Activated CD4-positive, alpha-beta T cell treated with anti-CD3 and anti-CD28 coated beads, Interleukin-2, amount 10 ng/mL, durations not matched to agents 7 days and 5 days (primary cell): ENCODE measurements at regions of chr16 and their contacts with region 1.

Region 1: GRCh38 chr16:18801197-18801972 is at the start of gene ARL6IP1:
- DNase-seq: peak; percentile 98
- H3K4me3 Mint-ChIP-seq: peak within 1 kb of the TSS; percentile 99
- H3K27ac Mint-ChIP-seq: peak within 1 kb of the TSS; percentile 98
- H3K4me1 Mint-ChIP-seq: peaks cover 73% of the 10 kb centered on the region
- H3K27me3 Mint-ChIP-seq: no peaks in the 10 kb centered on the region
- total RNA-seq, gene ARL6IP1: 276 to 321 TPM

Region 2: GRCh38 chr16:18789850-18790724 is 11.3 kb before region 1 on chr16 and contains the start of gene RPS15A:
- CTCF ChIA-PET with region 1: interaction called, 86 read pairs
- POLR2A ChIA-PET with region 1: interaction called, 34 read pairs
- DNase-seq: peak; percentile 97
- H3K4me3 Mint-ChIP-seq: peak within 1 kb of the TSS; percentile 85
- H3K27ac Mint-ChIP-seq: peak within 1 kb of the TSS; percentile 94
- H3K4me1 Mint-ChIP-seq: peaks cover 57% of the 10 kb centered on the region
- H3K27me3 Mint-ChIP-seq: no peaks in the 10 kb centered on the region
- total RNA-seq, gene RPS15A: 1,939 to 2,119 TPM

Region 3: GRCh38 chr16:18816286-18816685 is 14.9 kb after region 1 on chr16:
- CTCF ChIA-PET with region 1: interaction called, 31 read pairs
- POLR2A ChIA-PET with region 1: interaction called, 3 read pairs
- DNase-seq: no peak
- H3K4me3 Mint-ChIP-seq: no peak overlapping the region
- H3K27ac Mint-ChIP-seq: no peak overlapping the region
- H3K4me1 Mint-ChIP-seq: peaks cover 13% of the 10 kb centered on the region
- H3K27me3 Mint-ChIP-seq: no peaks in the 10 kb centered on the region

Region 4: GRCh38 chr16:18832006-18832405 is 30.6 kb after region 1 on chr16:
- CTCF ChIA-PET with region 1: interaction called, 11 read pairs
- POLR2A ChIA-PET with region 1: no interaction called
- DNase-seq: no peak
- H3K4me3 Mint-ChIP-seq: no peak overlapping the region
- H3K27ac Mint-ChIP-seq: no peak overlapping the region
- H3K4me1 Mint-ChIP-seq: peaks cover 4% of the 10 kb centered on the region
- H3K27me3 Mint-ChIP-seq: no peaks in the 10 kb centered on the region

Region 5: DNA sequence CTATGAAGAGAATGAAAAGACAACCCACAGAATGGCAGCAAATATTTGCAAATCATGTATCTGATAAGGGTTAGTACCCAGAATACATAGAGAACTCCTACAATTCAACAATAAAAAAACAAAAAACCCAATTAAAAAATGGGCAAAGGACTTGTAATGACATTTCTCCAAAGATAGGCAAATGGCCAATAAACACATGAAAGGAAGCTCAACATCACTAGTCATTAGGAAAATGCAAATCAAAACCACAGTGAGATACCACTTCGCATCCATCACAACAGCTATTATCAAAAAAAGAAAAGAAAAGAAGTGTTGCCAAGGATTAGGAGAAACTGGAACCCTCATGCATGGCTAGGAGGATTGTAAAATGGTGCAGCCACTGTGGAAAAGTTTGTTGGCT is 45.0 kb after region 1 on chr16:
- CTCF ChIA-PET with region 1: interaction called, 13 read pairs
- POLR2A ChIA-PET with region 1: no interaction called
- DNase-seq: no peak
- H3K4me3 Mint-ChIP-seq: no peak overlapping the region
- H3K27ac Mint-ChIP-seq: no peak overlapping the region
- H3K4me1 Mint-ChIP-seq: no peaks in the 10 kb centered on the region
- H3K27me3 Mint-ChIP-seq: no peaks in the 10 kb centered on the region

Region 6: DNA sequence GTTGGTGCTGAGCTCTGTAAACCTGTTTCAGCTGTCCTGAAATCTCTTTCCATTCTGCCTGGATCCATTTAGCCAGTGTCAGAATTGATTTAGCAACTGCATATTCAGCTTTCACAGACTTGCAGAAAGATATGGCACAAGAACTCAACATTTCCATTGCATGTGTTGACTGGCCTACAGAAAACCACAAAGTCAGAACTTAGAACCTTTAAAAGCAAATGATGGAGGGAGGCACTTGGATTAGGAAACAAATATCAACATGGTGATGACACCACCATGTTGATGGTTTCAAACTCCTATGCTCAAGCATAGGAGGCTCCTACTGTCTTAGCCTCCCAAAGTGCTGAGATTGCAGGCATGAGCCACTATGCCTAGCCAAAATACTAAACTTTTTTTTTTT is 52.3 kb after region 1 on chr16:
- CTCF ChIA-PET with region 1: interaction called, 13 read pairs
- POLR2A ChIA-PET with region 1: interaction called, 3 read pairs
- DNase-seq: no peak
- H3K4me3 Mint-ChIP-seq: no peak overlapping the region
- H3K27ac Mint-ChIP-seq: no peak overlapping the region
- H3K4me1 Mint-ChIP-seq: no peaks in the 10 kb centered on the region
- H3K27me3 Mint-ChIP-seq: no peaks in the 10 kb centered on the region

Region 7: GRCh38 chr16:19029980-19030379 is 228.6 kb after region 1 on chr16:
- CTCF ChIA-PET with region 1: no interaction called
- POLR2A ChIA-PET with region 1: no interaction called
- DNase-seq: no peak
- H3K4me3 Mint-ChIP-seq: no peak overlapping the region
- H3K27ac Mint-ChIP-seq: no peak overlapping the region
- H3K4me1 Mint-ChIP-seq: no peaks in the 10 kb centered on the region
- H3K27me3 Mint-ChIP-seq: no peaks in the 10 kb centered on the region